ENCODE measurements at regions of chr3 and their contacts with region 1.

Region 1: GRCh38 chr3:160027541-160028195 is 39.0 kb downstream of the IL12A start:
- DNase-seq: peak; percentile 75
- H3K4me3 ChIP-seq: no peak overlapping the region
- H3K27ac ChIP-seq: no peak overlapping the region
- H3K4me1 ChIP-seq: peaks cover 5% of the 10 kb centered on the region
- H3K27me3 ChIP-seq: no peaks in the 10 kb centered on the region
- CTCF ChIP-seq: no peak

Region 2: DNA sequence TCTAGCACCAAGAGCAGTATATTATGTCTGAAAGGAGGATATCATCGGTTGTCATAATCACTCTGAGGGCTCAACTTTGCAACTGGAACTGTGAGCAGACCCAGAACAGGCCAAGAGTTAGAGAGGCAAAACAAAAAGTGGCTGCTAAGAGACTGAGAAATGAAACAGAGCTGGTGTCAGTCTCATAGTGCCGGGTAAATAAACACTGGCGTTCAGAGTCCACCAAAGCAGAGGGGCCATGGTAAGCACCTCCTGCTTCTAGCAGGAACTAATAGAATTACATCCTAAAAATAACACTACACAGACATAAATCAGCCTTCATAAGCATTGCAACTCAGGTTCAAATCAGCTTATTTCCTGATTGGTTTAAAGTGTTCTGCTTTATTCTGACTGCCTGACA is 49.3 kb before region 1 on chr3:
- CTCF ChIA-PET with region 1: no interaction called
- dilution Hi-C with region 1: no loop called
- in situ Hi-C with region 1: no loop called
- intact Hi-C with region 1: no loop called
- DNase-seq: no peak
- H3K4me3 ChIP-seq: no peak overlapping the region
- H3K27ac ChIP-seq: no peak overlapping the region
- H3K4me1 ChIP-seq: no peaks in the 10 kb centered on the region
- H3K27me3 ChIP-seq: no peaks in the 10 kb centered on the region
- CTCF ChIP-seq: no peak

Region 3: GRCh38 chr3:160069986-160070385 is 42.3 kb after region 1 on chr3:
- CTCF ChIA-PET with region 1: interaction called, 11 read pairs
- dilution Hi-C with region 1: no loop called
- in situ Hi-C with region 1: no loop called
- intact Hi-C with region 1: no loop called
- DNase-seq: no peak
- H3K4me3 ChIP-seq: no peak overlapping the region
- H3K27ac ChIP-seq: no peak overlapping the region
- H3K4me1 ChIP-seq: no peaks in the 10 kb centered on the region
- H3K27me3 ChIP-seq: peaks cover 2% of the 10 kb centered on the region
- CTCF ChIP-seq: no peak

Region 4: DNA sequence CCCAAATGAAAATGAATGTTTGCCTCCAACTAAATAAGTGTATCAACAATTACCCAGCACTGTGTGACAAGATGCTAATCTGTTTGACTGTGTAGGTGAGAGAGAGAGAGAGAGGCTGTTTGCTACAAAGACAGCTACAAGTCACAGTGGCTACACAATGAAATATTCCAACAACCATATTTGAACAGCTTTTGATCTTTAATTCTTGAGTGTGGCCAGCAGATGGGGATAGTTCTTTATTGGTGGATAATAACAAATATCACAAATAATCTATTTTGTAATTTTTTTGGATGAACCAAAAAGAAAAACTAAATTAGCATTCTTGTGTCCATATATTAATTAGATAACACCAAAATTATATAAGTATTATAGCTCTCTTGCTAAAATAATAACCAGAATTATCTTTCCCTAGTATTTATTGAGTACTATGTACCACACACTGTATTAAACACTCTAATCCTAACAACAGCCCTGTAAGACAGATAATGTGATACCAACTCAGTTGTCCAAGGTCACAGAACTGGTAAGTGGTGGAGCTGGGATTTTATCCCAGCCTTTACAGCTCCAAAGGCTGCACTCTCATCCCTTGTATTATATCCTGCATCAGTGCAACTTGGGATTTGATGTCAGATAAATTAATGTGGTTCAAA is 135.7 kb after region 1 on chr3:
- CTCF ChIA-PET with region 1: no interaction called
- dilution Hi-C with region 1: no loop called
- in situ Hi-C with region 1: no loop called
- intact Hi-C with region 1: loop called (anchors 5 kb)
- DNase-seq: no peak
- H3K4me3 ChIP-seq: no peak overlapping the region
- H3K27ac ChIP-seq: no peak overlapping the region
- H3K4me1 ChIP-seq: no peaks in the 10 kb centered on the region
- H3K27me3 ChIP-seq: no peaks in the 10 kb centered on the region
- CTCF ChIP-seq: peak; percentile 31 to 46

Region 5: DNA sequence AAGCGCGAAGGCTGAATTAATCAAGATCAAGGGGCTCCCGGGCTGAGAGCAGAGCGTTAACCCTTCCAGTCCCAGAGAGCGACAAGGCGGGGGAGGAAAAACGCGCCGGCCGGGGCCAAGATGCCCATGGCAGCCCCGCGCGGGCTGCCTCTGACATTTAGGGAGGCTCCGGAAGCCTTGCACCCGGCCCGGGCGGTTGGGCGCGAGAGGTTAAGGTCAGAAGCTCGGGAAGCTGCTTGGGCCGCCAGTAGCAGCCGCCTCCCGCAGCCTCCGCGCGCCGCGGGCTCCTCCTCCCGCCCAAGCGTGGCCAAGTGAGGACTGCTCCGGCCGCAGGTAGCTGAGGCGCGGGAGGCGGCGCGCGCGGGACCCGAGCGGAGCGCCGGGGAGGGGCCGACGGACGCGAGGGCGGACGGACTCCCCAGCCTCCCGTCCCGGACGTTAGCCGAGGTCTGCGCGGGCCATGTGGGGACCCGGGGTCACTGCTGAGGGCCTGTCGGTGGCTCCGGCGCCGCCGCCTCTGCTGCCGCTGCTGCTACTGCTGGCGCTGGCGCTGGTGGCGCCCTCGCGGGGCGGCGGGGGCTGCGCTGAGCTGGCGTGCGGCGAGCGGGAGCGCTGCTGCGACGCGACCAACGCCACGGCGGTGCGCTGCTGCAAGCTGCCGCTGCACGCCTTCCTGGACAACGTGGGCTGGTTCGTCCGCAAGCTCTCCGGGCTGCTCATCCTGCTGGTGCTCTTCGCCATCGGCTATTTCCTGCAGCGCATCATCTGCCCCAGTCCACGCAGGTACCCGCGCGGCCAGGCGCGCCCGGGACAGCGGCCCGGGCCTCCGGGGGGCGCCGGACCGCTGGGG is 197.7 kb after region 1 on chr3 and contains the start of gene C3orf80:
- CTCF ChIA-PET with region 1: no interaction called
- dilution Hi-C with region 1: no loop called
- in situ Hi-C with region 1: no loop called
- intact Hi-C with region 1: loop called (anchors 5 kb)
- DNase-seq: peak; percentile 35
- H3K4me3 ChIP-seq: peak within 1 kb of the TSS; percentile 37 to 60 (median 47)
- H3K27ac ChIP-seq: no peak within 1 kb of the TSS
- H3K4me1 ChIP-seq: peaks cover 19% of the 10 kb centered on the region
- H3K27me3 ChIP-seq: peaks cover 43% of the 10 kb centered on the region
- CTCF ChIP-seq: no peak
- total RNA-seq, gene C3orf80: not detected

Region 6: DNA sequence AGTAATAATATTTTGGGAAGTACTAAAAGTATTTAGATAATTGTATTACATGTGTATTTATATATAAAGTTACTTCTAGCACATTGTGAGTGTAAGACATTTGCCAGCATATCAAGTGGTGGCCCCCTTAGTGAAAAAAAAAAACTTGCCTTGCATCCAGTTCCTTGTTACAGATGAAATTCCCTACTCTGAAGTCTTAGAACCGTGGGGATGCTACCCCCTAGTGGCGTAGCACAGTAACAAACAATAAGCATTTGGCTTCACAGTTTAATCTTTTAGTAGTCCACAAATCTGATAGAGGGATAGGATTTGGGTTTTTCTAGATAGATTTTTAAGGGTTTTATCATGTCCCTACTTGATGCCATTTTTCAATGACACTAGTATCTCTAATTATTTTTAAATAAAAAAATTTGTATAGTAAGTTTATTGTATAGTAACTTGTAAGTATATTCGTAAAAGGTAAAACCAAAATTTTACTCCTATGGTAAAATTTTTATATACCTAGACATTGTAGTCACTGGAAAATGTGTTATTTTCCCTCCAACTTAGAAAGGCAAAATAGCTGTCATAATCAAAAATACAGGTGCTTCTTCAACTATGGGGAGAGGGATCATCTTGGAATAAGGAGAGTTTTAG is 386.1 kb after region 1 on chr3:
- CTCF ChIA-PET with region 1: interaction called, 3 read pairs
- dilution Hi-C with region 1: no loop called
- in situ Hi-C with region 1: no loop called
- intact Hi-C with region 1: loop called (anchors 1 kb)
- DNase-seq: peak; percentile 54
- H3K4me3 ChIP-seq: no peak overlapping the region
- H3K27ac ChIP-seq: no peak overlapping the region
- H3K4me1 ChIP-seq: no peaks in the 10 kb centered on the region
- H3K27me3 ChIP-seq: no peaks in the 10 kb centered on the region
- CTCF ChIP-seq: peak; percentile 85 to 90

Measured in mammary epithelial cell (primary cell).